SK-N-SH (cell line): ENCODE measurements at regions of chr2 and their contacts with region 1.

Region 1: GRCh38 chr2:72137498-72138010 is 10.1 kb downstream of the CYP26B1 start:
- DNase-seq: peak; percentile 87
- H3K4me3 ChIP-seq: peak overlapping the region in 1 of 2 experiments; percentile 36; a peak in 1 of 4 replicates
- H3K27ac ChIP-seq: no peak overlapping the region
- H3K4me1 ChIP-seq: no peaks in the 10 kb centered on the region
- H3K27me3 ChIP-seq: no peaks in the 10 kb centered on the region; the same call in 1 of the 2 replicates
- CTCF ChIP-seq: peak; percentile 95
- EP300 ChIP-seq: no peak
- RAD21 ChIP-seq: peak; percentile 54

Region 2: DNA sequence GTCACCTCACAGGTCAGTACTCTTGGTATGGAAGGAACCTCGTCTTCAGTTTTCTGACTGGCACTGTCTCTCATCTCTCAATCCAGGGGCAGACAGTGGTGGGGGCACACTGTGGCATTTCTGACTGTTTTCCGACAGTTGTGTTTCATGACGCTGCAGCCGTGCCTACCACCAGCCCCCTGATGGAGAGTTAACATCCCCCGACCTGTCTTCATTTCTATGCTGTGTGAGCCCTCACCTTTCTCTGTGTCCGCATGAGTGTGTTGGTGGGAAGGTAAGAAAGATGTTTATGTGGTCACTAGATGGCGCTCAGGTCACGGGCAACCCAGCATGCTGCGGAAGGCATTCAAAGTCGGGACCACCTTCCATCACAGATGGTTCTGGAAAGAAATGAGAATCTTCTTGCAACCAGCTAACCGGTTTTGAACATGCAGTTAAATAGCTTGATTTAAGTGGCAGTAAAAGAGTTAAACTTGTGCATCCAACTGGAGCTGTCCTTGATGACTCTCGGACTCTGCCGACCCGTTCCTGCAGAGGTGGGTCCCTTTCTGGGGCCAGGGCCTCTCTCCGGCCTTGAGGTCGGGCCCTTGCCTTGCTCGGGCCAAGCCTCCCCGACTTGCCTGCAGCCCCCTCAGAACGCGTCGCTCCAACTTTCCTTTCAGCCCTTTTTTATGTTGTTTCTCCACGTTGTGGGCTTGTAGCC is 591.8 kb before region 1 on chr2:
- CTCF ChIA-PET with region 1: interaction called, 20 read pairs
- POLR2A ChIA-PET with region 1: no interaction called
- DNase-seq: peak; percentile 82
- H3K4me3 ChIP-seq: peak overlapping the region; percentile 12 to 19; a peak in 2 of 4 replicates
- H3K27ac ChIP-seq: no peak overlapping the region
- H3K4me1 ChIP-seq: no peaks in the 10 kb centered on the region; a peak in 1 of 4 replicates
- H3K27me3 ChIP-seq: no peaks in the 10 kb centered on the region; the same call in 1 of the 2 replicates
- CTCF ChIP-seq: peak; percentile 81
- EP300 ChIP-seq: no peak
- RAD21 ChIP-seq: peak; percentile 97

Region 3: DNA sequence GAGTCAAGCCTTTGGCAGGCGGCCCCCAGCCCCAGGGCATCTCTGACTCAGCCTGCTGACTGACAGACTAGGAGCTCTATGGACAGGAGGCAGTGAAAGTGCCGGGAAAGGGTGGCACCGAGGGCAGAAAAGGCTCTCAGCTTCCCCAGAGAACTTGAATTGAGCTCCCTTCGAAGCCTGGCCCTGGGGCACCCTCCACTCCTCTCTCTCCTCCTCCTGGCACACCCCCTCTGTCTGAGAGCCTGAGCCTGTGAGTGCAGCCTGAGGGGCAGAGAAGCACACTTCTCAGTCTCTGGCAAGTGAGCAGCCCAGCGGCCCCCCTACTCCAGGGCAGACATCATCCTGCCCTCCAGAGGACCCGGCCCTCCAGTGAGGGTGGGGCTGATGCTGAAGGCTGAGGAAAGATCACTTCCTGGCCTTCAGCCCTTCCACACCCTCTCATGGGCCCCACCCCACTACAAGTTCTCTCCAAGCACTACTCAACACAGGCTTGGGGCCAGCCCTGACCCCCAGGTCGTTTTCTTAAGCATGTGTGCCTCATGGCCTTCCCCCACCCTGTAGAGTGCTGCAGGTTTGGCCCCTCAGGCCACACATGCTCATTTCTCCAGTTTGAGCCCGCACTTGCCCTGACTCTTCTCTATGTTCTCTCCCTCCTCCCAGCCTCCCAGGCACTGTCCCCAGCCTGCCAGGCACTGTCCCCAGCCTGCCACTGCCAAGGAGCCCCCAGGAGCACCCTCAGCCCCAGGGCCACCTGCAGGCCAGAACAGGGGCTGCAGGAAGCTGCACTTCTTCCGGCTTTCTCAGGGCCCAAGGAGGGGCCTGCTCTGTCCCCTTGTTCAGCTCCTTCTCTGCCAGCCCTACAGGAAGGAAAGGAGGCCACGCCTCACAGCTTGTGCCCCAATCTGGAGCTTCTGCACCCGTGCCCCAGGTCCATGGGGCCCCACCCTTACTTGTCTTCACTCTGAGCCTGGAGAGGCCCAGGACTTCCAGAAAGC is 21.7 kb before region 1 on chr2:
- CTCF ChIA-PET with region 1: interaction called, 23 read pairs
- POLR2A ChIA-PET with region 1: no interaction called
- DNase-seq: peak; percentile 46
- H3K4me3 ChIP-seq: no peak overlapping the region; a peak in 1 of 4 replicates
- H3K27ac ChIP-seq: peak overlapping the region in 1 of 2 experiments; percentile 53; a peak in 2 of 4 replicates
- H3K4me1 ChIP-seq: peaks cover 3 to 13% of the 10 kb centered on the region in 2 experiments; a peak in 3 of 4 replicates
- H3K27me3 ChIP-seq: no peaks in the 10 kb centered on the region; the same call in 1 of the 2 replicates
- CTCF ChIP-seq: peak; percentile 54
- EP300 ChIP-seq: peak in 1 of 2 experiments; percentile 9; a peak in 1 of 4 replicates
- RAD21 ChIP-seq: no peak

Region 4: DNA sequence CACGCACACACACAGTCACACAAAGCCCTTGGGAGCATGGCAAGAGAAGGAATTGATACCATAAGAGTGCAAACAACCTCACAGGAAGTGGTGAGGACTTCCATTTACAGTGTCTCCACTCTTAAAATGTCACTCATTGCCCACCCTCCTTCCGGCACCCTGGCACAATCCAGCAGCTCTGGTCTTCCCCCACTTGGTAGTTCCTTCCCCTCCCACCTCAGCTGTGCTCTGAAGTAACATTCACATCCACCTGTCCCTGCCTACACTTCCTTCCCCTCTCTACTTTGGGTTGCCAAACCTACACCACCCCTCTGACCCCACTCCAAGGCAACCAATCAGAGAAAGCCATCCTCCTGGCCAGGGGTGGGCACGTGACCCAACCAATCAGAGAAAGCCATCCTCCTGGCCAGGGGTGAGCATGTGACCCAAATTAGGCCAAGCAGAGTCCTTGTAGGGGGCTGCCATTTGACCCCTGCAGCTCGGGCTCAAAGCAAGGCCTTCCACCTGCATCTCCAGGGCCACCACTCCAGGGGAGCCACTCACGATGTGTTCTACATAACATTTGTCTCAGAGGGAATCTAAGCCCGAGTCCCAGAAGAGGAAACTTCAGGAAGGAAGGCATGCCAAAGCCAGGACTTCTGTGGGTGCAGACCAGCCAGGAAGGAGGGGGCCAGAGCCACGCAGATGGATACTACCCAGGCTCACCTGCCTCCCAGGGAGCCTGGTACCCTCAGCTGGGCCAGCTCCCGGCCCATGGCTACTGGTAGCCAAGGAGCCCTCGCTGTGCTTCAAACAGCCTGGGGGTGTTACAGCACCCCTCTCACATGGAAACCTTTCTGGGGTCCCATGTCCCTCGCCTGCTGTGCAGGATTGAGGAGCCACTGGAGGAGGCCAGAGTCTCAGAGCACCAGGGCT is 11.1 kb before region 1 on chr2:
- CTCF ChIA-PET with region 1: interaction called, 16 read pairs
- POLR2A ChIA-PET with region 1: no interaction called
- DNase-seq: no peak
- H3K4me3 ChIP-seq: no peak overlapping the region
- H3K27ac ChIP-seq: no peak overlapping the region
- H3K4me1 ChIP-seq: no peaks in the 10 kb centered on the region
- H3K27me3 ChIP-seq: peaks cover 7% of the 10 kb centered on the region; the same call in 1 of the 2 replicates
- CTCF ChIP-seq: no peak
- EP300 ChIP-seq: no peak
- RAD21 ChIP-seq: no peak

Region 5: DNA sequence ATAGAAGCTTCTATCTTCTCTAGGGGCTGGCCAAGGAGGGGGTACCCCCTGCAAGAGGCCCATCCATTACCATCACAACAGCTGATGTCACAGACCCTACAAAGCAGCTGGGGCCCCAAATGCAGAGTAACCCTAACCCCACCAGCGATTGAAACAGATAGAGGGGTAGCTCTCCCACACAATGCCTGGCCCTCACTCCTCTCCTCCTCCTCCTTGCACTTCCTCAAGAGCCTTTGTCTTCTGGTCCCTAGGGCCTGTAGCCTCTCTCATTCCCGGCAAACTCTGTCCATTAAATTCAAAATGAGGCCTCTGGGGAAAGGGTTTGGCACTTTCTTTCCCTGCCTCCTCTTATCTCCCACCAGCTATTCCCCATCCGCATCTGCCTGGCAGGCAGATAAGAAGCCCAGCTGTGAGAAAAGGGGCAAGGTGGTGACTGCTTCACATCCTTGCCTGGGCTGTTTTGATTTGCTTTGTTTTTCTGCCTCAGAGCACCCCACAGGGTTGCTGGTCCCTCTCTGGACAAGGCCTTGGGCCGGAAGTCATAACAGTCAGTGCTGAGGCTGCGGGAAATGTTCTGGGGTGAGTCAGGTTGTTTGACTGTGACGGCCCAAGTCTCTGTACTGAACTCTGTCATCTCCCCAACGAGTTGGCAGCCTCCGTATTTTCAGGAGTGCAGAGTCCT is 36.2 kb after region 1 on chr2:
- CTCF ChIA-PET with region 1: no interaction called
- POLR2A ChIA-PET with region 1: no interaction called
- DNase-seq: peak; percentile 48
- H3K4me3 ChIP-seq: no peak overlapping the region
- H3K27ac ChIP-seq: no peak overlapping the region
- H3K4me1 ChIP-seq: peaks cover 0 to 9% of the 10 kb centered on the region in 2 experiments; a peak in 1 of 4 replicates
- H3K27me3 ChIP-seq: no peaks in the 10 kb centered on the region
- CTCF ChIP-seq: no peak
- EP300 ChIP-seq: no peak
- RAD21 ChIP-seq: no peak

Region 6: GRCh38 chr2:72261076-72261475 is 123.5 kb after region 1 on chr2:
- CTCF ChIA-PET with region 1: no interaction called
- POLR2A ChIA-PET with region 1: no interaction called
- DNase-seq: no peak
- H3K4me3 ChIP-seq: no peak overlapping the region
- H3K27ac ChIP-seq: no peak overlapping the region
- H3K4me1 ChIP-seq: peaks cover 0 to 3% of the 10 kb centered on the region in 2 experiments; a peak in 2 of 4 replicates
- H3K27me3 ChIP-seq: no peaks in the 10 kb centered on the region
- CTCF ChIP-seq: no peak
- EP300 ChIP-seq: no peak
- RAD21 ChIP-seq: no peak

Region 7: GRCh38 chr2:72638600-72639194 is 501.1 kb after region 1 on chr2:
- CTCF ChIA-PET with region 1: no interaction called
- POLR2A ChIA-PET with region 1: no interaction called
- DNase-seq: no peak
- H3K4me3 ChIP-seq: no peak overlapping the region
- H3K27ac ChIP-seq: no peak overlapping the region
- H3K4me1 ChIP-seq: no peaks in the 10 kb centered on the region
- H3K27me3 ChIP-seq: no peaks in the 10 kb centered on the region
- CTCF ChIP-seq: no peak
- EP300 ChIP-seq: no peak
- RAD21 ChIP-seq: no peak